ENCODE measurements at regions of chr20 and their contacts with region 1.

Region 1: GRCh38 chr20:34069341-34070078 is 42.5 kb downstream of the EIF2S2 start:
- DNase-seq: peak; percentile 86
- H3K4me3 Mint-ChIP-seq: no peak overlapping the region
- H3K27ac Mint-ChIP-seq: no peak overlapping the region
- H3K4me1 Mint-ChIP-seq: peaks cover 31% of the 10 kb centered on the region
- H3K27me3 Mint-ChIP-seq: no peaks in the 10 kb centered on the region

Region 2: GRCh38 chr20:33853507-33853813 is 216.1 kb before region 1 on chr20:
- intact Hi-C with region 1: loop called (anchors 5 kb)
- DNase-seq: peak; percentile 85
- H3K4me3 Mint-ChIP-seq: peak overlapping the region; percentile 66
- H3K27ac Mint-ChIP-seq: peak overlapping the region; percentile 86
- H3K4me1 Mint-ChIP-seq: peaks cover 59% of the 10 kb centered on the region
- H3K27me3 Mint-ChIP-seq: no peaks in the 10 kb centered on the region

Region 3: DNA sequence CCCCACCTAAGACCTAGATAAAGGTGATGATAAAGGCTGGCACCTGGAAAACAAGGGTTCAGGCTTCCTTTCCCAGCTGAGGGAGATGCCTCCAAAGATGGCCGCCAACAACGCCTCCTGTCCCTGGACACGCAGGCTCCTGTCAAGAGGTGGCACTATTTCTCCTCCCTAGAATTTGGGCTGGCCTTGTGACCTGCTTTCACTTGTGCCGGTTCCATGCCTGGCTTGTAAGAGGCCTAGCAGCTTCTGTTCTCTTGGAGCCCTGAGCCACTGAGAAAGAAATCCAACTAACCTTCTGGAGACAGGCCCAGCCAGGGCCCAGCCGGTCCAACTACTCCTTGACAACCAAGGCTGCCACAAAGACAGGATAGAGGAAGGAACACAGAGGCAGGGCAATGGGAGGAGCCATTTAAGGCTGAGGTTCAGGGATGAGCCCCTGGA is 136.0 kb before region 1 on chr20:
- intact Hi-C with region 1: loop called (anchors 2 kb)
- DNase-seq: peak; percentile 89
- H3K4me3 Mint-ChIP-seq: no peak overlapping the region
- H3K27ac Mint-ChIP-seq: no peak overlapping the region
- H3K4me1 Mint-ChIP-seq: peaks cover 2% of the 10 kb centered on the region
- H3K27me3 Mint-ChIP-seq: peaks cover 2% of the 10 kb centered on the region

Region 4: GRCh38 chr20:33947709-33948295 is 121.7 kb before region 1 on chr20:
- intact Hi-C with region 1: loop called (anchors 5 kb)
- DNase-seq: peak; percentile 81
- H3K4me3 Mint-ChIP-seq: no peak overlapping the region
- H3K27ac Mint-ChIP-seq: no peak overlapping the region
- H3K4me1 Mint-ChIP-seq: no peaks in the 10 kb centered on the region
- H3K27me3 Mint-ChIP-seq: peaks cover 9% of the 10 kb centered on the region

Region 5: GRCh38 chr20:34111702-34112599 is 42.4 kb after region 1 on chr20 and contains the start of gene EIF2S2:
- intact Hi-C with region 1: no loop called
- DNase-seq: peak; percentile 99
- H3K4me3 Mint-ChIP-seq: peak within 1 kb of the TSS; percentile 89
- H3K27ac Mint-ChIP-seq: peak within 1 kb of the TSS; percentile 98
- H3K4me1 Mint-ChIP-seq: peaks cover 35% of the 10 kb centered on the region
- H3K27me3 Mint-ChIP-seq: peaks cover 7% of the 10 kb centered on the region
- total RNA-seq, gene EIF2S2: 106 and 107 TPM in 2 replicates